Ascending aorta (tissue), 2 donors: ENCODE measurements at regions of chr3 and their contacts with region 1.

Region 1: GRCh38 chr3:9843715-9844438 is at the start of gene RPUSD3:
- DNase-seq: peak; percentile 89 to 99
- H3K4me3 ChIP-seq: peak within 1 kb of the TSS; percentile 76 to 77
- H3K27ac ChIP-seq: peak within 1 kb of the TSS; percentile 80 to 84
- H3K4me1 ChIP-seq: peaks cover 4 to 9% of the 10 kb centered on the region in 2 donors
- H3K27me3 ChIP-seq: no peaks in the 10 kb centered on the region
- CTCF ChIP-seq: no peak
- total RNA-seq, gene RPUSD3: 30.7 TPM

Region 2: DNA sequence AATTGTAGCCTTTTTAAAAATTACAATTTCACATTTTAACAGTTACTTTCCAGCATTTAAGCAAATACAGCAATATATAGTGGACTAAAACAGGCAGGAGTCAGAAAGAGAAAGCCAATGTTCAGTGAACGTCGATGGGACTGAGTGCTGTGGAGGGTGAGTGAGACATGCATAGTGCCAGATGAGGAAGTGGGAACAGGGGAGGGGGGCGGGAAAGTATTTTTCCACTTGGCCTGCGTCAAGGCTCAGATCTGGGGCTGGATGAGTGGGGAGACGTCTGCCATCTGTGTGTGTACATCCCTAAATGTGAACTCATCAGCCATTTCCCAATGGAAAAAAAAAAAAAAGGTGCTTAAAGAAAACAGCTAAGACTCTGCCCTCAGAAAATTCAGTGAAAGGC is 861.4 kb before region 1 on chr3:
- intact Hi-C with region 1: no loop called
- DNase-seq: no peak
- H3K4me3 ChIP-seq: no peak overlapping the region
- H3K27ac ChIP-seq: no peak overlapping the region
- H3K4me1 ChIP-seq: no peaks in the 10 kb centered on the region
- H3K27me3 ChIP-seq: no peaks in the 10 kb centered on the region
- CTCF ChIP-seq: no peak

Region 3: DNA sequence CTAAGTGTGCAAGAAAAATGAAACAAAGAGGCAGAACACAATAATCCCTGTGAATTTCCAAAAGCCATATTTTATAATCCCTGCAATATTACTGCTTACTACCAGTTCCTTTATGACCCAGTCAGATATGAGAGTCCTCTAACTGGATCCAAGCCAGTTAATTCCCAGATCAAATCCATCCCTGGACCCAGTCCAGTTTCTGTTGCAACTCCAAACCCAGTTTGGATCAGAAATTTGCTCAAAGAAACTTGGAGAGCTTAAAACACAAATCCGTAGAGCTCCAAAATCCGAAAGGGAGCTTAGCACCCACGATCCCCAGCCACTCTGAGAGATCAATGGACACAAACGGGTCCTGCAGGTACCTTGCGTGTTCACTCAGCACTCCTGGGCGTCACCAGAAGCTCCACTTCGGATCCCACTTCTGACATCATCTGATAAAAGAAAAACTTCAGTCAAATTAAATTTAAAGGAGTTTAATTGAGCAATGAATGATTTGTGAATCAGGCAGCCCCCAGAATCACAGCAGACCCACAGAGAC is 513.6 kb before region 1 on chr3:
- intact Hi-C with region 1: no loop called
- DNase-seq: no peak
- H3K4me3 ChIP-seq: no peak overlapping the region
- H3K27ac ChIP-seq: no peak overlapping the region
- H3K4me1 ChIP-seq: no peaks in the 10 kb centered on the region
- H3K27me3 ChIP-seq: no peaks in the 10 kb centered on the region
- CTCF ChIP-seq: no peak

Region 4: DNA sequence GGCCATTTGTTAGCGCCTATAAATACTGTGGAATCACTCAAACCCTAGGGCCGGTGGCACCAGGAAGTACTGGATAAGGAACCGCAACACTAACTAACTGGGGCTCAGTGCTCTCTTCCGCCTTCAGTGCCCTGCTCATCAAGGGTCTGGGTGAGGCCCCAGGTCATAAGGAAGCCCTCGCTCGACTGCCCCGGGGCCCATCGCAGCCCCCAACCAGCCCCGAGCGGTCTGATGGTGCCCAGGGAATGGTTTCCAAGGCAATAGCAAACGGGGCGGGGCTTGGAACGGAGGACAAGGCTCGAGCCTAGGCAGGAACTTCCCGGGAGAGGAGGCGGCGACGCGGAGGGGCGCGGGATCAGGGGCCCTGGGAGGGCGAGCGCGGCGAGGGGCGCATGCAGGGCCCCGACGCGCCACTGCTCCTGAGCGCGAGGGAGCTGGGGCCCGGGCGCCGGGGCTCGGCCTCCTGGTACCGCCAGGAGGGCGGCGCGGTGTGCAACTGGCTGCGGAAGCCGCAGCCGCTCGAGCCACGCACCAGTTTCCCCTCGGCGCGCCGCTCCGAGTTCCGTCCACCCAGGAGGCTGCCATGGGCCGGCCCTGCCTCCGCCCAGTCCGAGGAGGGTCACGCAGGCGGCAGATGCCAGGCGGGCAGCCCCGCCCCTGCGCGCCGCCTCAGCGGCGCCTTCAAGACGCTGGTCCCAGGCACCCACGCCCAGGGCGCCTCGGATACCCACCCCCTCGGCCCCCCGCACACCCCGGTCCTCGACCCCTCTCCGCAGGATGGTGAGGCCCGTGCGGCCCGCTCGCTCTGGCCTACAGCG is 34.1 kb before region 1 on chr3 and contains the start of gene TTLL3:
- intact Hi-C with region 1: loop called (anchors 1 kb)
- DNase-seq: peak in 1 of 2 donors; percentile 90
- H3K4me3 ChIP-seq: peak within 1 kb of the TSS; percentile 71 to 80
- H3K27ac ChIP-seq: peak within 1 kb of the TSS; percentile 94 to 95
- H3K4me1 ChIP-seq: peaks cover 5 to 10% of the 10 kb centered on the region in 2 donors
- H3K27me3 ChIP-seq: no peaks in the 10 kb centered on the region
- CTCF ChIP-seq: no peak
- total RNA-seq, gene TTLL3: 47.0 TPM

Region 5: GRCh38 chr3:9915254-9916141 is 71.6 kb after region 1 on chr3:
- intact Hi-C with region 1: loop called (anchors 1 kb)
- DNase-seq: peak in 1 of 2 donors; percentile 85
- H3K4me3 ChIP-seq: peak overlapping the region; percentile 62 to 89
- H3K27ac ChIP-seq: peak overlapping the region; percentile 79 to 86
- H3K4me1 ChIP-seq: peaks cover 22 to 32% of the 10 kb centered on the region in 2 donors
- H3K27me3 ChIP-seq: no peaks in the 10 kb centered on the region
- CTCF ChIP-seq: peak in 2 of 3 experiments; percentile 32 to 56

Region 6: GRCh38 chr3:9932843-9933560 is 89.1 kb after region 1 on chr3:
- intact Hi-C with region 1: loop called (anchors 2 kb)
- DNase-seq: peak; percentile 53 to 96
- H3K4me3 ChIP-seq: peak overlapping the region; percentile 82 to 96
- H3K27ac ChIP-seq: peak overlapping the region; percentile 97 to 99
- H3K4me1 ChIP-seq: peaks cover 11 to 21% of the 10 kb centered on the region in 2 donors
- H3K27me3 ChIP-seq: no peaks in the 10 kb centered on the region
- CTCF ChIP-seq: peak; percentile 84 to 93 (median 89)